ENCODE measurements at regions of chr4 and their contacts with region 1.

Region 1: DNA sequence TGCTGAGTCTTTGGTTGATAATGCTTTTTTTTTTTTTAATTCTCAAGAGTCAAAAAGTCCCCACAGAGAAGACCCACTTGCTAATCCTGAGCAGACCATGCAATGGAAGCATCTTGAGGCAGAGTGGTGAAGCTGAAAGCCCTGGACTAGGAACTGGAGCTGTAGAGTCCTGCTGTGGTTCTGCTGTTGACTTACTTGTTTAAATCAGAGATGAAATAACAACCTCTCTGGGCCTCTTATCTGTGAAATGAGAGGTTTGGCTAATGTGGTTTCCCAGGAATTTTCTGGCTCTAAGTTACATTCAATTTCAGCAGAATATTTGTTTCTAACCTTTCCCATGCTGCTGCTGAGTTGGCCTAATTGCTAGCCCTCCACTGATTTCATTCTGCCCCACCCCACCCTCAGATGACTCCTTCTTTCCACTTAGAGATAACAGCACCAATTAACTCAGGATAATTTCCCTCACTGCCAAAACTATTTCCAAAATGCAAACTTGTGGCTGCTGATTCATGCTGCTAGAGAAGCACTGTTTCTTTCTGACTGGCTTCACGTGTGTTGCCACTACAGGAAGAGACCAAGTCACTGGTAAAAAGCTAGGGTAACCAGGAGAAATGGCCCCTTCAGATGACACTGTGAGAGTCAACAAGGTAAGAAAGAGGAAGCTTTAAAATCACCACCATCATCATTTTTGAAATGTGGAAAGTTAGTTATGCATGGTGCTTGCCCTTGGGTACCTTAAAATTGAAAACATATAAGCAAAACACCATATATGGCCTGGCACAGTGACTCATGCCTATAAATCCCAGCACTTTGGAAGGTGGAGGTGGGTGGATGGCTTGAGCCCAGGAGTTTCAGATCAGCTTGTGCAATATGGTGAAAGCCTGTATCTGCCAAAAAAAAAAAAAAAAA is 326.4 kb downstream of the DCHS2 start:
- DNase-seq: peak; percentile 93
- H3K4me3 Mint-ChIP-seq: peak overlapping the region; percentile 9
- H3K27ac Mint-ChIP-seq: peak overlapping the region; percentile 84
- H3K4me1 Mint-ChIP-seq: peaks cover 36% of the 10 kb centered on the region
- H3K27me3 Mint-ChIP-seq: no peaks in the 10 kb centered on the region
- CTCF ChIP-seq: no peak

Region 2: DNA sequence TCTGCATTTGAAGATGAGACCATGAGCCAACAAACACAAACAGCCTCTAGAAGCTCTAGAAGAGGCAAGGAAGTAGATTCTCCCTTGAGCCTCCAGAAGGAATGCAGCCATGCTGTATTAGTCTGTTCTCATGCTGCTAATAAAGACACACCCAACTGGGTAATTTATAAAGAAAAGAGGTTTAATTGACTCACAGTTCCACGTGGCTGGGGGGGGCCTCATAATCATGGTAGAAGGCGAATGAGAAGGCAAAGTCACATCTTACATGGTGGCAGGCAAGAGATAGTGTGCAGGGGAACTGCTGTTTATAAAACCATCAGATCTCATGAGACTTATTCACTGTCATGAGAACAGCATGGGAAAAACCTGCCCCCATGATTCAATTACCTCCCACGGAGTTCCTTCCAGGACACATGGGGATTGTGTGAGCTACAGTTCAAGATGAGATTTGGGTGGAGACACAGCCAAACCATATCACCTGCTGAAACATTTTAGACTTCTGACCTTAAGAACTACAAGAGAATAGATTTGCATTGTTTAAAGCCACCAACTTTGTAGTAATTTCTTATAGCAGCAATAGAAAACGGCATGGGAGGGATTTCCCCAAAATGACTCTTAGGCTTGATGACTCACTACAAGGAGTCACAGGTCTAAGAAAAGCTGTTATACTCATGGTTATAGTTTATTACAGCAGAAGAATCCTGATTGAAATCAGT is 91.9 kb before region 1 on chr4:
- CTCF ChIA-PET with region 1: no interaction called
- POLR2A ChIA-PET with region 1: no interaction called
- intact Hi-C with region 1: loop called (anchors 5 kb)
- DNase-seq: peak; percentile 76
- H3K4me3 Mint-ChIP-seq: no peak overlapping the region
- H3K27ac Mint-ChIP-seq: no peak overlapping the region
- H3K4me1 Mint-ChIP-seq: peaks cover 13% of the 10 kb centered on the region
- H3K27me3 Mint-ChIP-seq: no peaks in the 10 kb centered on the region
- CTCF ChIP-seq: no peak

Region 3: GRCh38 chr4:154124539-154125255 is 40.5 kb before region 1 on chr4:
- CTCF ChIA-PET with region 1: no interaction called
- POLR2A ChIA-PET with region 1: no interaction called
- intact Hi-C with region 1: loop called (anchors 1 kb)
- DNase-seq: peak; percentile 79
- H3K4me3 Mint-ChIP-seq: no peak overlapping the region
- H3K27ac Mint-ChIP-seq: peak overlapping the region; percentile 44
- H3K4me1 Mint-ChIP-seq: peaks cover 17% of the 10 kb centered on the region
- H3K27me3 Mint-ChIP-seq: no peaks in the 10 kb centered on the region
- CTCF ChIP-seq: no peak